ENCODE measurements at regions of chrX and their contacts with region 1.

Region 1: DNA sequence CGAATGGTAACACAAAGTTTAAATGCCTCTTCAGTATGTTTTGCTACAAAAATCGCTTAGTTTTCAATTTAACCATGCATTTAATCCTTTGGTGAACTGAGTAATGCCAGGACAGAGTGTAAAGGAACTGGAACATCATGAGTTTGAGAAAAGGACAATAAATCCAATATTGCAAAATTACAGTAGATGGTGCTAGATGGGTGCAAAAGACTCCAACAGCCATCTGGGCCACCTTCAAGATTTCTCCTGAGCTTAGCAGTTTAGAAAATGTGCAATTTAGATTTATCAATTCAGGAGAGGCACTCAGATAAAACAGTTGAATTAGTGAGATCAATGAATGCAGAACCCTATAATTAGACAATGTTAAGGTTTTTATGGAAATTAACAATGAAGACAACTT is 33.2 kb upstream of the MID1IP1 start:
- DNase-seq: peak in 1 of 7 donors; percentile 13
- H3K4me3 ChIP-seq: no peak overlapping the region
- H3K27ac ChIP-seq: no peak overlapping the region
- H3K4me1 ChIP-seq: no peaks in the 10 kb centered on the region
- H3K27me3 ChIP-seq: peaks cover 8% of the 10 kb centered on the region
- CTCF ChIP-seq: peak; percentile 15 to 58 (median 52)
- POLR2A ChIP-seq: no peak

Region 2: DNA sequence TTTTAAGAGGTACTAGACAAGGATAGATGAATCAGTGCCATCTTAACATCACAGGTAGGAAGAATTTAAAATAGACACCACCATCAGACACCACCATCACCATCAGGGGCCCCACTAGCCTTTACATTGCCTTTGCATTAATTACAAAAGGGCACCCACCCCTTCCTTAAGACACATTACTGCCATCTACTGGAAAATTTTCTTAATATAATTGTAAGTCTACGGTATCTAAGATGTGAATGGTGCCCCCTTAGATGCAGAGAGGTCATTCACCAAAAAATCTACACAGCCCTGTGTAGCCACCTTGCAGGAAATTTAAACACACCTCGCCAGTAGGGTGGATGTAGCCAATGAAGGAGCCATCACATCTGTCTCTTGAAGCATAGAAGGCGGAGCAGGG is 217.3 kb after region 1 on chrX:
- intact Hi-C with region 1: loop called in 1 of 2 experiments (anchors 10 kb)
- DNase-seq: no peak
- H3K4me3 ChIP-seq: no peak overlapping the region
- H3K27ac ChIP-seq: no peak overlapping the region
- H3K4me1 ChIP-seq: no peaks in the 10 kb centered on the region
- H3K27me3 ChIP-seq: peaks cover 26% of the 10 kb centered on the region
- CTCF ChIP-seq: peak in 3 of 6 experiments; percentile 24 to 40 (median 34)
- POLR2A ChIP-seq: no peak

Region 3: GRCh38 chrX:39149761-39150160 is 381.7 kb after region 1 on chrX:
- intact Hi-C with region 1: loop called in 1 of 2 experiments (anchors 5 kb)
- DNase-seq: peak; percentile 39 to 86 (median 62)
- H3K4me3 ChIP-seq: no peak overlapping the region
- H3K27ac ChIP-seq: no peak overlapping the region
- H3K4me1 ChIP-seq: no peaks in the 10 kb centered on the region
- H3K27me3 ChIP-seq: peaks cover 14% of the 10 kb centered on the region
- CTCF ChIP-seq: peak; percentile 34 to 66 (median 54)
- POLR2A ChIP-seq: no peak

Region 4: GRCh38 chrX:39238006-39238405 is 469.9 kb after region 1 on chrX:
- intact Hi-C with region 1: loop called in 1 of 2 experiments (anchors 10 kb)
- DNase-seq: no peak
- H3K4me3 ChIP-seq: no peak overlapping the region
- H3K27ac ChIP-seq: no peak overlapping the region
- H3K4me1 ChIP-seq: no peaks in the 10 kb centered on the region
- H3K27me3 ChIP-seq: peaks cover 27% of the 10 kb centered on the region
- CTCF ChIP-seq: no peak
- POLR2A ChIP-seq: no peak